Uterus (tissue), 4 donors: ENCODE measurements at regions of chr21 and their contacts with region 1.

Region 1: DNA sequence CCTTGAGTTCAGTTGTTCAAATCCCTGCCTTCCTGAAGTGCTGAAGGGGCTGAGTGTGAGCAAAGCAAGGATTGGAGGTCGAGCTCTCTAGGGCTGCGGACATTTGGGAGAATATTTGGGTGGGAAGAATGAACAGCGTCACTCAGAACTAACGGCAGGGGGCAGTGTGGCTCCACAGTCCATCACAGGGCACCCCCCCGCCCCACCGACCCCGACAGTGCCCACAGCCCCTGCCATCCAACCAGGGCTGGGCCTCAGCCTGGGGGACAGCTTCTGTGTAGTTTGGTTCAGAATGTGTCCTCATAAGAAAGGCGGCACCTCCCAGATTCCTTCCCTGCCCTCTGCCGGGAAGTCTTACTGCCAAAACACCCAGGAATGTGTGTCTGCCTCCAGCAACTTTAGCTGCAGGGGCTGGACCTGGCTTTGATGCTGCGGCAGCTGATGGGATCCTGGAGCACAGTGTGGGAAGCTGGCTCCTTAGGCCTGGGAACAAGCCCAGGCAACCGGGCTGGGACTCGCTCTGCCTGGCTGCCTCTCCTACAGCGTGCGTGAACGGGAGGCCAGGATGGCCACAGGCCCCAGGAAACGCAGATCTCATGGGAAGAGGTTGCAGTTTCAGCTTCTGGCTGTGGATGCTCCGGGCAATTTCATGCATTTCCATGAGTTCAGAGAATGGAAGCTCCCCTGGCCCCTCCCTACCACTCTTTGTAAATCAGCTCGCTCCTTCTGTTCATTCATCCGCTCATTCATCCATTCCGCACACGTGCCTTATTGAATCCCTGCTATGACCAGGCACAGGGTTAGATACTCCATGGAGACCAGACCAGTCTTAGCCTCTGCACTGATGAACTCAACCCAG is 104.9 kb upstream of the TMPRSS2 start:
- DNase-seq: peak; percentile 54 to 77
- H3K4me3 ChIP-seq: no peak overlapping the region
- H3K27ac ChIP-seq: peak overlapping the region in 1 of 2 donors; percentile 58
- H3K4me1 ChIP-seq: no peaks in the 10 kb centered on the region
- H3K27me3 ChIP-seq: no peaks in the 10 kb centered on the region
- CTCF ChIP-seq: peak; percentile 58 to 70 (median 65)
- POLR2A ChIP-seq: no peak

Region 2: GRCh38 chr21:41777951-41778874 is 165.3 kb after region 1 on chr21:
- intact Hi-C with region 1: loop called (anchors 5 kb)
- DNase-seq: peak; percentile 65 to 85
- H3K4me3 ChIP-seq: no peak overlapping the region
- H3K27ac ChIP-seq: no peak overlapping the region
- H3K4me1 ChIP-seq: no peaks in the 10 kb centered on the region
- H3K27me3 ChIP-seq: peaks cover 4 to 36% of the 10 kb centered on the region in 2 donors
- CTCF ChIP-seq: peak; percentile 80 to 88 (median 86)
- POLR2A ChIP-seq: no peak